Activated T-helper 1 cell treated with anti-CD3 and anti-CD28 coated beads, Interleukin-12 subunit alpha, Interleukin-12 subunit beta, Interleukin-2, Interleukin-4 antibody, amounts not matched to agents 30 ng/mL and 10 ng/mL and 1 ng/mL, durations not matched to agents 14 hours and 24 hours and 36 hours (primary cell): ENCODE measurements at regions of chr14 and their contacts with region 1.

Region 1: DNA sequence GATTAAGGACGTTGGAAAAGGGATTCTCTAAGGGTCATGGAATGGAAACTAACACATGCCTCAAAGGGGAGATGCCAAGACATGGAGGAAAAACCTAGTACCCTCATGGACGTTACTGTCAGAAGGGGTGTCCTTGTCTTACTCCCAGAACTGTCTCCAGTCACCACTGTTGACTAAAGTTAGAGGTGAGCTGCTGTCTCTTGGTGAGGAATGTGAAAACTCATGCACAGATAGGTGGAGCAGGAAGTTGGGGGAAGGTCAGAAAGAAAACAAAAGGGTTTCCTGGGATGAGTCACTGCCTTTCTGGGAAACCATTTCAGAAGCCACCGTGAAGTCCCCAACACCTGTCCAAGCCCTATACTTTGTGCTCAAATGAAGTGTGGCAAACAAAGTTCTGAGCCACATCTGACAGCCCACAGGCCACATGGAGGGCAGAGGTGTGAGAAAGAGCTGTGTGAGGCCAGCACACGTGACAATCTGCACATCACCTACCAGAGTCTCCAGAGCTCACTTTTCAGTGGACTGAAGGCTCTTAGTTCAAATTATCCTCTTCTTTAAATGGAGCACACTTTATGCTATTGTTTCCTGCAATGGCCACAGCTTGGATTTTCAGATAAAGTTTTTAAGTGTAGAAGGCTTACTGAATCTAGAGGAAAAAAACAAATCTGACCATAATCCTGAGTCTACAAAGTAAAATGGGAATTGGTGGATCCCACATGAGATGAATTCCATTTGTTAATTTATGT is 92.9 kb upstream of the EGLN3 start:
- DNase-seq: peak; percentile 91
- H3K4me3 Mint-ChIP-seq: peak overlapping the region; percentile 71
- H3K27ac Mint-ChIP-seq: peak overlapping the region; percentile 87
- H3K4me1 Mint-ChIP-seq: peaks cover 70% of the 10 kb centered on the region
- H3K27me3 Mint-ChIP-seq: no peaks in the 10 kb centered on the region

Region 2: GRCh38 chr14:33839193-33840076 is 204.4 kb before region 1 on chr14:
- intact Hi-C with region 1: loop called (anchors 2 kb)
- DNase-seq: peak; percentile 49
- H3K4me3 Mint-ChIP-seq: no peak overlapping the region
- H3K27ac Mint-ChIP-seq: no peak overlapping the region
- H3K4me1 Mint-ChIP-seq: peaks cover 58% of the 10 kb centered on the region
- H3K27me3 Mint-ChIP-seq: peaks cover 3% of the 10 kb centered on the region

Region 3: DNA sequence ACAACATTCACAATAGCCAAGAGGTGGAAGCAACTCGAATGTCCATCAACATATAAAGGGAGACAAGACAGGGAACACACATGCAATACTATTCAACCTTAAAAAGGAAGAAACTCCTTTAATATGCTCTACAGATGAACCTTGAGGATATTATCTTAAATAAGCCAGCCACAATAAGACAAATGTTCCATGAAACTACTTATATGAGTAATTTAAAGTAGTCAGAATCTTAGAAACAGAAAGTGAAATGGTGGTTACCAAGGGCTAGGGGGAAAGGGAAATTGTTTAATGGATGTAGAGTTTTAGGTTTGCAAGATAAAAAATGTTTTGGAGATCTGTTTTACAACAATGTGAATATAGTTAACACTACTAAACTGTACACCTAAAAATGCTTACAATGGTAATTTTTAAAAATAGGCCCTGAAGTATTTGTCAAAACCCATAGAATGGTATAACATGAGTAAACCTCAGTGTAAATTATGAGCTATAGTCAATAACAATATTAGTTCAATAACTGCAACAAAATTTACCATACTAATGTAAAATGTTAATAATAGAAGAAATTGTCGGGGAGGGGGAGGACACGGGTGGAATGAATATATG is 164.0 kb before region 1 on chr14:
- intact Hi-C with region 1: loop called (anchors 1 kb)
- DNase-seq: no peak
- H3K4me3 Mint-ChIP-seq: no peak overlapping the region
- H3K27ac Mint-ChIP-seq: no peak overlapping the region
- H3K4me1 Mint-ChIP-seq: peaks cover 15% of the 10 kb centered on the region
- H3K27me3 Mint-ChIP-seq: peaks cover 11% of the 10 kb centered on the region

Region 4: GRCh38 chr14:34012978-34013720 is 30.7 kb before region 1 on chr14:
- intact Hi-C with region 1: loop called (anchors 1 kb)
- DNase-seq: no peak
- H3K4me3 Mint-ChIP-seq: peak overlapping the region; percentile 47
- H3K27ac Mint-ChIP-seq: peak overlapping the region; percentile 82
- H3K4me1 Mint-ChIP-seq: peaks cover 47% of the 10 kb centered on the region
- H3K27me3 Mint-ChIP-seq: no peaks in the 10 kb centered on the region

Region 5: DNA sequence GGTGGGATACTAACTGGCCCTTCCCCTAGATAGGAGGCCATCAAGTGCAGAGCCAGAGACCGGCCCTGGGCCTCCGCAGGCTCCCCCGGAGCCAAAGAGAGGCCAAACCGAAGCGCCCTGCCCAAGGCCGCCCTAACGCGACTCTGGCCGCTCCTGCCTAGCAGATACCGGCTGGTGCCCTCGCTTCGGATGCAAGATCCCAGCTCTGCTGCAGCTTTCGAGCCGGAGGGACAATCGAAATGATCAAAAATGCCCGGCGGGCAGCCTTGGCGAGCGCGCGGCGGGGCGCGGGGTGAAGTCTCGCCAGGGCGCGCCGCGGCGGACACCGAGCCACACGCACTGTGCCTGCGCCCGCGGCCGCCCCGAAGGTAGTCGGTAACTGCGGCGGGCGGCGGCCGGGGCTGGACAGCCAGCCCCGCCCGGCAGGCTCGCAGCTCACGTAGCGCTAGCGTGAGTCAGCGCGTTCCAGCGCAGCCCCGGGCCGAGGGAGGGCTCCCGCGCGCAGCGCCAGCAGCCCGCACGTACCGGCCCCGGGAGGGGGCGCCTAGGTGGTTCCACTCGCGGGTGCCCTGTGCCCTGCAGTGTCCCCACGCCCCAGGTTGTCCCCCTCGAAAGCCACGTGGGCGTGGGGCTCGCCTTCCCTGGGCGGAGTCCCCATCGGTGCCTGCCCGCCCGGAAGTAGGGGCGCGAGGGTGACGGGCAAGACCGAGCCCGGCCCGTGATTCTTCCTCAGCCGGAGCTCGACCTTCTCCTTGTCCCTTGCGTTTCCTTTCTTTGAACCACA is 16.2 kb after region 1 on chr14:
- intact Hi-C with region 1: loop called (anchors 1 kb)
- DNase-seq: peak; percentile 66
- H3K4me3 Mint-ChIP-seq: peak overlapping the region; percentile 83
- H3K27ac Mint-ChIP-seq: peak overlapping the region; percentile 87
- H3K4me1 Mint-ChIP-seq: peaks cover 48% of the 10 kb centered on the region
- H3K27me3 Mint-ChIP-seq: peaks cover 4% of the 10 kb centered on the region

Region 6: DNA sequence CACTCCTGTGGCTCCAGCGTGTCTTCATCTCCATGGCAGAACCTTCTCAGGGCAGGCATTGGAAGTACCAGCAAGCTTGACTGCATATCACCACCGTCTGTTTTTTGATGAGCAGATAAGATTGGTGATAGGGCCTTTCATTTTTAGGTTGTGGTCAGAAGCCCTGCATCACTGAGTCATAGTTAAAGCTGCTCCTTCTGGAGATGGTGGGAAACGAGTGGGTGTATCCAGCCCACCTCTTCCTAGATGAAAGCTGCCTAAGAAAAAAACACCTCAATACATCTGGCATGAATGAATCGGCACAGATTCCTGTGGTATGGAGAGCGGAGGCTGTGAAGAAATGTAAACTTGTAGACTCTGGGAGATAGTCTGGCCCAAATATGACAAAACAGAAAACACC is 155.8 kb after region 1 on chr14:
- intact Hi-C with region 1: loop called (anchors 2 kb)
- DNase-seq: no peak
- H3K4me3 Mint-ChIP-seq: peak overlapping the region; percentile 56
- H3K27ac Mint-ChIP-seq: peak overlapping the region; percentile 63
- H3K4me1 Mint-ChIP-seq: peaks cover 56% of the 10 kb centered on the region
- H3K27me3 Mint-ChIP-seq: no peaks in the 10 kb centered on the region

Region 7: GRCh38 chr14:34461334-34462131 is 417.7 kb after region 1 on chr14:
- intact Hi-C with region 1: loop called (anchors 10 kb)
- DNase-seq: no peak
- H3K4me3 Mint-ChIP-seq: peak overlapping the region; percentile 90
- H3K27ac Mint-ChIP-seq: peak overlapping the region; percentile 91
- H3K4me1 Mint-ChIP-seq: peaks cover 28% of the 10 kb centered on the region
- H3K27me3 Mint-ChIP-seq: no peaks in the 10 kb centered on the region